Activated CD4-positive, alpha-beta memory T cell treated with anti-CD3 and anti-CD28 coated beads for 36 hours (primary cell): ENCODE measurements at regions of chr5 and their contacts with region 1.

Region 1: DNA sequence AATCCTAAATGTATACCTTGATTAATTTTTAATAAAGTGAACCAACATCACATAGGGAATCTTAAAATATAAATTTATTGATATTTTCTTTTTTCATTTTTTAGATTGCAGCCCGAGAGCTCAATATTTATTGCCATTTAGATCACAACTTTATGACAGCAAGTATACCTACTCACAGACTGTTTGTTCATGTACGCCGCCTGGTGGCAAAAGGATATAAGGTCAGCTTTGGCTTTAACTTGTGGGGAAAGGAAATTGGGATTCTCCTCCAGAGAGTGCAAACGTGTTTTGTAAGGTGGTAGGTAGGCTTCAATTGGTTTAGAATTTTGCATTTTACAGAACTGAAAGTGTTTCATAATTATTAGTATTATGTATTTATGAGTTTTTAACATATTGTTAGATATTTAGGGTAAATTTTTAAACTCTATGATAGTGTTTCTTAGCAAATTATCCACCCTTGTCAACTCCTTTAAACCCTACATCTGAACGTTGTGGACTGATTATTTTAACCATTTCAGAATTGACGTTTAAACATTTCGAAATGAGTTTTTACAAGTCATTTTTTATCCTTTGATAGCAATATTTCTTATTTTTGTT is 17.5 kb upstream of the DHFR start:
- DNase-seq: peak; percentile 78
- H3K4me3 Mint-ChIP-seq: no peak overlapping the region
- H3K27ac Mint-ChIP-seq: no peak overlapping the region
- H3K4me1 Mint-ChIP-seq: no peaks in the 10 kb centered on the region
- H3K27me3 Mint-ChIP-seq: no peaks in the 10 kb centered on the region

Region 2: GRCh38 chr5:80346055-80346454 is 326.2 kb before region 1 on chr5:
- CTCF ChIA-PET with region 1: no interaction called
- POLR2A ChIA-PET with region 1: no interaction called
- intact Hi-C with region 1: loop called (anchors 2 kb)
- DNase-seq: peak; percentile 52
- H3K4me3 Mint-ChIP-seq: no peak overlapping the region
- H3K27ac Mint-ChIP-seq: no peak overlapping the region
- H3K4me1 Mint-ChIP-seq: no peaks in the 10 kb centered on the region
- H3K27me3 Mint-ChIP-seq: peaks cover 6% of the 10 kb centered on the region

Region 3: DNA sequence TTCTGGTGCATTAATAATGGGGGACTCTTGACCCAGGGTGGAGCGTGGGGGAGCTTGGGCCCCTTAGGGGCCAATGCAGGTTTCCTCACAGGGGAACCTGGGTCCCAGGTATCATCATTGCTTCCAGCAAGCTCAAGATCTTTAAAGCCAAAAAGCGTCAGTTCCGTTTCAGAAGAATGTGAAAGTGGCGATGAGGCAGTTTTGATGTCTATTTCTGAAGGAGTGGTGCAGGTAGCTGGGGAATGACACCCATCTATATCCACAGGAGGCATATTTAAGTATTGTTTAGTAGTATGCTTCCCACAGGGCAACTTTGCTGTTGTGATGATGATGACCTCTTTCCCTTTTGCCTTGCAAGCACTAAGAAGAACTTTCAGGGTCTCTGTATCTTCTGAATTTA is 113.0 kb before region 1 on chr5:
- CTCF ChIA-PET with region 1: no interaction called
- POLR2A ChIA-PET with region 1: no interaction called
- intact Hi-C with region 1: no loop called
- DNase-seq: no peak
- H3K4me3 Mint-ChIP-seq: no peak overlapping the region
- H3K27ac Mint-ChIP-seq: no peak overlapping the region
- H3K4me1 Mint-ChIP-seq: no peaks in the 10 kb centered on the region
- H3K27me3 Mint-ChIP-seq: peaks cover 18% of the 10 kb centered on the region